Right ventricle myocardium inferior (tissue), 1 donor: ENCODE measurements at regions of chr6 and their contacts with region 1.

Region 1: DNA sequence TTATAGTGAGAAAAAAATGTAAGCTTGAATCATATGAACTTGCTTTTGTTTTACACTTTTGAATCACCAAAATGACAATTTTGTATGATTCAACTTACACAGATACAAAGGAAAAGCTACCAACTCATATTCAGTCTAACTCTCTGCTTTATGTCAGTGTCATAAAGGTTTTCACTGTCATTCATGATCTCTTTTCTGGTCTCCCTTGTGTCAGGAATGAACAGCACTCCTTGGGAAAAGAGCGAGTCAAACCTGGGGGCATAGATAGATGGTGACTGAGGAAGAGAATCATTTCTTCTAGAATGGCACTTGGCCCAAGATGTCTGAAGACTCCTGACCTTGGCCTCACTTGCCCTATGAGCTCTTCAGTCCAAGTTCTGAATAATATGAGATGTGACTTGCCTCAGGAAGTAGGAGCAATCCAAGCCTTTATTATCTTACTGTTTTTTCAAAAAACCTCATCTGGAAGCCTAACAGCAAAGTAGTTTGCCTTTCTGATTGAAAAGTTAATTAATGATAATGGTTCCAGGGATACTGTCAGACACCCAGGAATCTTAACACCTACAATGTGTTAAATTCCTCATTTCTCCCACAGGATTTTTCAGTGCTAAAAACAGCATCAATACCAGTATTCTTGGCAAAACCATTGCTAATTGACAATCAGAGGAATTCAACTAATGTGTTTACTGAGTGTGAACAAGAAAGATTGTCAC is 270.0 kb upstream of the HSF2 start:
- DNase-seq: no peak
- ATAC-seq: peak; percentile 27

Region 2: DNA sequence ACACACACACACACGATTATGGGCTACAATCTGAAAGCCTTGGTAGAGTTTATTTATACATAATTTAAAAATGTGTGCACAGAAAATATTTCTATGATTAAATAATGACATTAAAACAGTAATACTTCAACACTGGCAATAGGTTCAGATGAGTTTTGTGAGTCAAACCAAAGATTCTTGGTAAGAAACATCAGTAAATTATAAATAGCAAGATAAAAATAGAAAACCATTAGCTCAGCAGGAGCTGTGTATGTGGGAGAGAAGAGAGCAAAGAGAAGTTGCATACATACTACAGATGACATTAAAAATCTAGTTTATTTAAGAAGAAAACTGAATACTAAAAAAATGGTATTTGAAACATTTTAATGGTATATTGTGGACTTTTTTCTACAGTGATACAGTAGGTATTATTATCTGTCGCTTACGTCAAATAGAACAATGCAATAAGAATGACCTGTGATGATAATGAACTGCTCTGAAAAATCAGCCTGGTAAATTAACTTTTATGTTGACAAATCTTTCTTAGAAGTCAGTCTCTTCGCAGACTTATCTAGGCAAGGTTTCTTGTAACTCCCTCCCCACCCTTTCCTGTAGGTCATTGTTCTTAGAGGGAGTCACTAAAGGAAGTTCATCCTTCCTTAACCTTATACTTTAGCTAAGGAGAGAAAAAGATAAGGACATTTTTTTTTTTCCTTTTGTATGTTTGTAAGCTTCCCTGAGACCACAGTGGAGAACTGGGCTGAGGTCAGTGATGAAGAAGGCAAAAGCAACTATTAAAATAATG is 544.7 kb before region 1 on chr6:
- intact Hi-C with region 1: loop called (anchors 5 kb)
- DNase-seq: no peak
- ATAC-seq: no peak

Region 3: GRCh38 chr6:122008101-122008999 is 121.1 kb before region 1 on chr6:
- intact Hi-C with region 1: loop called (anchors 1 kb)
- DNase-seq: no peak
- ATAC-seq: peak; percentile 97

Region 4: DNA sequence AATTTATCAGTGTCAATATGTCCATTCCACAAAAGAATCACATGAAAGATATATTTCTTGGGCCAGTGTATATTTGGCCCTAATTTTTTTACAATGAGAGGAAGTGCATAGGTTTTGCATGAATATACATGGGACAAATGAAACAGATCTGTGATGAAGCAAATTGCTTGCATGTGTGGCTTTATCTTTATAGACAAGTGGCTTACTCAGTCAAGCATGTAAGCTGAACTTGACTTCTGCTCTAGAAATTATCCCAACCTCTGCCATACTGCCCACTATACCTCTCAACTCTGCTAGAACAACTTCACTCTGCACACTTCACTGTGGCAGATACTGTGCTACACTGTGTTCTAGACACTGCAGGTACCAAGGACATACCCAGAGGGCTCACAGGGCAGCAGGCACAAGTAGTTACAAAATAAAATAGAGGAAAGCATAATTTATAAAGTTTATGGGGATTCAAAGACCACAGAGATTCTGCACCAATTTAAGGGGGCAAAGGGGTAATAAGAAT is 79.2 kb before region 1 on chr6:
- intact Hi-C with region 1: loop called (anchors 5 kb)
- DNase-seq: no peak
- ATAC-seq: no peak

Region 5: DNA sequence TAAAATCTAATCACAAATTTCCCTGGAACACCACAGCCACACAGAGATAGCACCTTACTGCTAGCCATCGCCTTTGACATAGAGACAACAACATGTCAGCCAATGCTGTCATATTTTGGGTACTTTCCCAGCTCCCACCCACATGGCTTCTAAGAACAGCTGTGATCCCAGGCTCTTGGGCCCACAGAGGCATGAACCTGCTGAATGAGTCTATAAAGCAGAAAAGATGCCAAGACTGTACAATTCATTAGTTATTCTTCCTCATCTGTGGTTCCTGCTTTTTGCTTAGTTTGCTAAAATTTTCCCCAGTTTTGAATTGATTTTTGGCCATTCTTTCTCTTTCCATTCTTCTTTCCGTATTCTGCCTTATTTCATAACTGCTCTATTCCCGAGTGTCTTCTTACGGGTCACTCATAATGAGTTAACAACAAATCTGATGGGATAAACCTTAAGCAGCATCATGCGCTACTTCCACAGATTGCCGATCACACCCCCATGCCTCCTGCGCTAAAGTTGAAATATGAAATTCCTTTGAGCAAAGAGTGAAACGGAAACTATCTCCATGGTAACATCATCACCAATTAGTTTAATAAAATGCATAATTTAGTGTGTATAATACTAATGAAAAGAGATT is 57.3 kb before region 1 on chr6:
- intact Hi-C with region 1: no loop called
- DNase-seq: no peak
- ATAC-seq: peak; percentile 39

Region 6: DNA sequence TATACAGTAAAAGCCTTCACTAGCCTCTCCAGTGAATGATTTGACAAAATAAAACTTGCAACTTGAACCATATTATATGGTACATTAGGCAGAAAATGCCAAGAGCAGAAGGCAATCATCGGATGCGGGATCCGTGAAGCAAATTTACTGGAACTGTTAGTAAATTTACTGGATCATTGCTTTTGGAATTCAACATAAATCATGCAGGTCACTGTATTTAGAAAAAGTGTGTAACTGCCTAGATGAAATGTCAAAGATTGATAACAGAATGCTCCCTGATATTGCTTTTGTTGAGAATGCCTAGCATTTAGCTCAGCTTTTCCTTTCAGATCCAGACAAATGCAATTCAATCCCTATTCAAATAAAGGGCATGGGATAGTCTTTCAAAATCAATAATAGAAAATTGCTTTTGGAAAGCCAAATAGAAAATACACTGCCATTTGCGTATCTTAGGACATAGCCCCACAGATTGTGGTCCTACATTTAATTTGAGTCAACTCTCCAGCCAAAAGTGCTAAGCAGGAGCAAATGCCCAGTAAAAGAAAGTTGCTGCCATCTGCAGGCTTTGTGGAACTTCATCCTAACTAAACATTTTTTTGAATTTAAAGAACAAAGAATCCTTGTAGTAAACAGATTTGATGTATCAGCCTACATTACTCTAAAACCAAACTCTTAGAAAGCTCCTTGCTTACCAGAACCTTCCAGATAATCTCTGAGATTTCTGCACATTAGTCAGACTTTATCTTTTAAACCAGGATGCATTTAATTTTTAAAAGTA is 160.5 kb after region 1 on chr6:
- intact Hi-C with region 1: no loop called
- DNase-seq: no peak
- ATAC-seq: no peak

Region 7: GRCh38 chr6:123636782-123637181 is 1507.3 kb after region 1 on chr6 and contains the start of gene TRDN:
- intact Hi-C with region 1: loop called (anchors 5 kb)
- DNase-seq: no peak
- ATAC-seq: peak; percentile 91
- total RNA-seq, gene TRDN: 394 TPM